ENCODE measurements at regions of chr11 and their contacts with region 1.

Region 1: DNA sequence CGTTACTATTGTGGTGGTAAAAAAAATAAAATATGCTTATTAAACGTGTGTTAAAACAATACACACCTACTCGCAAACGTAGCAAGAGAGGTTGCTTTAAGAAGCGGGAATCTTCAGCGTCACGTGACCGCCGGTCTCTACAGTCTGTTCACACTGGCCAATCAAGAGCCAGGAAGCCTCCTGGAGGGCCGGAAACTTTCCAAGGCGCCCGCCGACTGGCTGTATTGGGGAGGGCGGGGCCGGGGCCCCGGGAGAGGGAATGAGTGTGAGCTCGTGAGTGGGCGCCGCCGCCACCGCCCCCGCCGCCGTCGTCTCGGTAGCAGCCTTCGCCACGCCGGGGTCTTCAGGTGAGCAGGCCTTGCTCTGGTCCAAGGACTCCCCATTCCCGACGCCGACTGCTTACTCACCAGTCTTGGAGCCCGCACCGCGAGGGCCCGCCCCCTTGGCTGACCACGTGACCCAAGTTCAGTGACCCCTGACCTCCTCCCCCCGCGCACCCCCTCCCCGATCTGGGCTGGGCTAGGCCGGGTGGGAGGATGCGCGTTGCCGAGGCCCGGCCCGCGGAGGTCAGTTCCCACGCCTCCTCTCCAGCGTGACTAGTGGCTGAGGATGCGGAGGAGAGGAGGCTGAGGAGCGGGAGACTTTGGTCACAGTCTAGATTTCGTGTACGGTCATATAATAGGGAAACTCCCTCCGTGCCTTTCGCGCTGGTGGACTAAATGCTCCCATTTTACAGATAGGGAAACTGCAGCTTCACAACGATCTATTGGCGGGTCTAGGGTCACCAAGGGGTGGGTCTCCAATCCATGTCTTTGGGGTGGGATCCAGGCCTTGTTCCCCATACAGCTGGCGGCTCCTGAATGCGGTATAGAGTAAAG is at the start of gene TAF6L:
- DNase-seq: peak; percentile 97
- H3K4me3 Mint-ChIP-seq: peak within 1 kb of the TSS; percentile 90
- H3K27ac Mint-ChIP-seq: peak within 1 kb of the TSS; percentile 94
- H3K4me1 Mint-ChIP-seq: peaks cover 36% of the 10 kb centered on the region
- H3K27me3 Mint-ChIP-seq: no peaks in the 10 kb centered on the region

Region 2: GRCh38 chr11:62753736-62754603 is 17.4 kb before region 1 on chr11 and contains the start of gene ZBTB3:
- CTCF ChIA-PET with region 1: interaction called, 19 read pairs
- DNase-seq: peak; percentile 98
- H3K4me3 Mint-ChIP-seq: peak within 1 kb of the TSS; percentile 87
- H3K27ac Mint-ChIP-seq: peak within 1 kb of the TSS; percentile 94
- H3K4me1 Mint-ChIP-seq: peaks cover 35% of the 10 kb centered on the region
- H3K27me3 Mint-ChIP-seq: peaks cover 8% of the 10 kb centered on the region

Measured in activated naive CD4-positive, alpha-beta T cell treated with anti-CD3 and anti-CD28 coated beads, Interleukin-2, amount 10 ng/mL, durations not matched to agents 7 days and 5 days (primary cell).